ENCODE measurements at regions of chr9 and their contacts with region 1.

Region 1: DNA sequence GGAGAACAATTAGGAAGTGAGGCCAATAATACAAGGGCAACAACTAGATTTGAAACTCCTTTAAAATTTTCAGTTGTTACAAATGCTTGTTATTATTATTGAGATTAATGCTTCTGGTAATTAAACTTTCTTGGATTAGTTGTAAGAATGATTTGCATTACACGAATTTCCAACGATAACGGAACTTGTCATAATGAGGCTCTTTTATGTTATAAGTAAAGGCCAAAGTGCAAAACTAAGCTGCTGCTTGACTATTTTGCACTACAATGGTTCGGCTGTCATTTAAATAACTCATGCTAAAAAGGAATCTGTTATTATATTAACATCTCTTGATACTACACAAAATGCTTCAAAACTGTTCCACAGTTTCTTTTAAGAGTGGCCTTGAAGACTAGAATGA is 1007.1 kb downstream of the PTPRD start:
- DNase-seq: no peak
- ATAC-seq: no peak
- H3K4me3 ChIP-seq: no peak overlapping the region
- H3K27ac ChIP-seq: no peak overlapping the region
- H3K4me1 ChIP-seq: no peaks in the 10 kb centered on the region
- H3K27me3 ChIP-seq: no peaks in the 10 kb centered on the region

Region 2: DNA sequence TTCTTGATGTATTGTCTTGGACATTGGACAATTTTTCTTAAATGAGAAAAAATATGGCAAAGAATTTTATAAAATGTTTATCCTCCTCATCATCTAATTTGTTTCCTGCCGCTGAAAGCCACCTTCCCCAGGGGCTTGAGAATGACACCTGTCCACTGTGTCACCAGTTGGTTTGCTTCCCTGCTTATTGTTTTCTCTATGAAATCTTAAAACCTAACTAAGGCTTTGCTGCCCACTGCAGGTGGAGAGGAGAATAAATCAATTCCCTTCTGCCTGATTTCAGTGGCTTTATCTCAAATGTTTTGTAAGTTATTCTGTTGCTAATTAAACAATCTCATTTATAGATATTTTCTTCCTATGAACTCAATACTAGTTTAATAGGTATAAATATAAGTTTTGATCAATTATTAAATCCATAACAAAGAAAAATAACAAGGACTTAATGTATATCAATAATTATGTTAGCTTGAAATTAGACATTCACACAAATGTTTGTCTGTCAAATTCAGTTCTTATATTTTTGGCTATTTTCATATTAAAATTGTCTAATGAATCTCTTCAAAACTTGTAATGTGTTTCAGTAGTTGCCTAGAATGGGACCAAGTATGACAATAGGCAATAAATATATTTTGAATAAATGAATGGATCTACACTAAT is 184.7 kb after region 1 on chr9:
- intact Hi-C with region 1: loop called (anchors 2 kb)
- DNase-seq: no peak
- ATAC-seq: no peak
- H3K4me3 ChIP-seq: no peak overlapping the region
- H3K27ac ChIP-seq: no peak overlapping the region
- H3K4me1 ChIP-seq: no peaks in the 10 kb centered on the region
- H3K27me3 ChIP-seq: no peaks in the 10 kb centered on the region

Region 3: DNA sequence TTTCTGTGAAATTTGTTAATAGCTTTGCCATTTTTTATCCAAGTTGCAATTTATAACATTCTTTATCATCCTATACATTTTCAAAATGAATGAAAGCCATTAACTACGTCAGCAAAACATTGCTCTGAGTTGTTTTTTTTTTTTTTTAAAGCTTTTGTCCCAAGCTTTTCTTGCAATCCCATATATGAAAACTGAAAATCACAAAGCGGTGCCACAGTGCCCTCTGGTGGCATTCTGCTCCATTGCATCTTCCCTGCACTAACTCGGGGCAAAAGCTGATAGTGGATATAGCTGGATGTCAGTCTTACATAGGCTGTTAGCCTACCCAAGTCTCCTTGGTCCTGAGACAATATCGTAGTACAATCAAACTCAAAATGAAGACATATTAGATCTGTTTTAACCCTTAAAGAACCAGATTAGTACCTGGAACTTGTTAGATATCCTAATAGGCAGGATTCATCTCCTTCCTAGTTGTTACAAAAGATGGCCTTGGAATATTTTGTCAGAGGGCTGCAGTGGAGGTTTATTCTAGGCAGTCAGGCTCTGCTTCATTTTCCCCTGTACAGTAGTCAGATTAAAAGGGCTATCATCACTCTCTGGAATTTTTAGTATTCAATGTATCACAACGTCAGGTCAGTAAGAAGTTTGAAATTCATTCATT is 337.2 kb after region 1 on chr9:
- intact Hi-C with region 1: loop called in 1 of 2 experiments (anchors 5 kb)
- DNase-seq: peak; percentile 42 to 83
- ATAC-seq: peak; percentile 83
- H3K4me3 ChIP-seq: no peak overlapping the region
- H3K27ac ChIP-seq: no peak overlapping the region
- H3K4me1 ChIP-seq: no peaks in the 10 kb centered on the region
- H3K27me3 ChIP-seq: no peaks in the 10 kb centered on the region

Region 4: GRCh38 chr9:10396615-10397014 is 790.9 kb after region 1 on chr9:
- intact Hi-C with region 1: no loop called
- DNase-seq: no peak
- ATAC-seq: no peak
- H3K4me3 ChIP-seq: no peak overlapping the region
- H3K27ac ChIP-seq: no peak overlapping the region
- H3K4me1 ChIP-seq: no peaks in the 10 kb centered on the region
- H3K27me3 ChIP-seq: no peaks in the 10 kb centered on the region

Measured in aorta (tissue), 5 donors.